ENCODE measurements at regions of chr3 and their contacts with region 1.

Region 1: GRCh38 chr3:97736928-97737327 is 27.6 kb upstream of the ARL6 start:
- DNase-seq: no peak
- ATAC-seq: no peak
- H3K4me3 ChIP-seq: no peak overlapping the region
- H3K4me3 Mint-ChIP-seq: no peak overlapping the region
- H3K27ac ChIP-seq: no peak overlapping the region
- H3K27ac Mint-ChIP-seq: no peak overlapping the region
- H3K4me1 ChIP-seq: no peaks in the 10 kb centered on the region
- H3K4me1 Mint-ChIP-seq: no peaks in the 10 kb centered on the region
- H3K27me3 ChIP-seq: no peaks in the 10 kb centered on the region
- H3K27me3 Mint-ChIP-seq: peaks cover 22% of the 10 kb centered on the region
- CTCF ChIP-seq: no peak

Region 2: DNA sequence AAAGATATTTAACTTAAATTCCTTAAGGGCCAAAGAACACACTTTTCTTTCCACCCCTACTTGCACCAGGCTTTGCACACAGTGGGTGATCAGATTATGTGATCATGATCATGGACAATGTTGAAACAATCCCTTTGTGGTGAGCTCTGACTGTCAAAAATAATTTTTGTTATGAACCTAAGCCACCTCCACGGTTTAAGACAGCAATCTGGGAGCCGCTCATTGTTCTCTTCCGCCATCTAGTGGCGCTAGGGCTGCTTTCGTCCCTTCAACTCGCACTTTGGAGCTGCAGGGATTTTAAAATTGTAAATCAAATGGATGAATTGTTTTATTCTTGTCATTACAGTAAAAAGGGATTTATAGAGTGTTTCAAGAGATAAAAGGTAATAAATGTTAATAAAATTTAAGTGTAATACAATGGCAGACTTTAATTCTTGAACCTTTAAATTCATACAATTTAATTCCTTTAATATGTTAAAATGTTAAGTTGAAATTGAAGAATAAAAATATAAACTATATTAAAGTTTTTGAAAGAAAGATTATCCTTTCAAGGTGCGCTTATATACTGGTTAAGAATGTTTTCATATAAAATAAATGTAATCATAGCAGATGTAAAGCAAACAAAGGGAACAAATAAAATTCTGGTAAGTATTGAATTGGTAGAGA is 17.6 kb before region 1 on chr3:
- CTCF ChIA-PET with region 1: interaction called, 10 read pairs
- POLR2A ChIA-PET with region 1: no interaction called
- intact Hi-C with region 1: no loop called
- DNase-seq: peak; percentile 68
- ATAC-seq: peak; percentile 70
- H3K4me3 ChIP-seq: no peak overlapping the region
- H3K4me3 Mint-ChIP-seq: peak overlapping the region; percentile 53
- H3K27ac ChIP-seq: no peak overlapping the region
- H3K27ac Mint-ChIP-seq: no peak overlapping the region
- H3K4me1 ChIP-seq: no peaks in the 10 kb centered on the region
- H3K4me1 Mint-ChIP-seq: no peaks in the 10 kb centered on the region
- H3K27me3 ChIP-seq: no peaks in the 10 kb centered on the region
- H3K27me3 Mint-ChIP-seq: peaks cover 6% of the 10 kb centered on the region
- CTCF ChIP-seq: peak; percentile 94

Measured in B cell (primary cell).